MCF 10A (cell line): ENCODE measurements at regions of chr10 and their contacts with region 1.

Region 1: GRCh38 chr10:25080880-25081581 is 64.6 kb downstream of the THNSL1 start:
- DNase-seq: peak; percentile 82
- H3K4me3 Mint-ChIP-seq: no peak overlapping the region
- H3K27ac Mint-ChIP-seq: no peak overlapping the region
- H3K4me1 Mint-ChIP-seq: no peaks in the 10 kb centered on the region
- H3K27me3 Mint-ChIP-seq: no peaks in the 10 kb centered on the region
- CTCF ChIP-seq: peak; percentile 82

Region 2: GRCh38 chr10:24642622-24643417 is 438.2 kb before region 1 on chr10:
- CTCF ChIA-PET with region 1: interaction called, 11 read pairs
- POLR2A ChIA-PET with region 1: interaction called, 4 read pairs
- intact Hi-C with region 1: loop called (anchors 1 kb)
- DNase-seq: peak; percentile 77
- H3K4me3 Mint-ChIP-seq: no peak overlapping the region
- H3K27ac Mint-ChIP-seq: no peak overlapping the region
- H3K4me1 Mint-ChIP-seq: peaks cover 6% of the 10 kb centered on the region
- H3K27me3 Mint-ChIP-seq: no peaks in the 10 kb centered on the region
- CTCF ChIP-seq: peak; percentile 68

Region 3: GRCh38 chr10:24989867-24990266 is 91.2 kb before region 1 on chr10:
- CTCF ChIA-PET with region 1: interaction called, 13 read pairs
- POLR2A ChIA-PET with region 1: no interaction called
- intact Hi-C with region 1: loop called (anchors 1 kb)
- DNase-seq: peak; percentile 4
- H3K4me3 Mint-ChIP-seq: no peak overlapping the region
- H3K27ac Mint-ChIP-seq: no peak overlapping the region
- H3K4me1 Mint-ChIP-seq: no peaks in the 10 kb centered on the region
- H3K27me3 Mint-ChIP-seq: no peaks in the 10 kb centered on the region
- CTCF ChIP-seq: peak; percentile 37

Region 4: DNA sequence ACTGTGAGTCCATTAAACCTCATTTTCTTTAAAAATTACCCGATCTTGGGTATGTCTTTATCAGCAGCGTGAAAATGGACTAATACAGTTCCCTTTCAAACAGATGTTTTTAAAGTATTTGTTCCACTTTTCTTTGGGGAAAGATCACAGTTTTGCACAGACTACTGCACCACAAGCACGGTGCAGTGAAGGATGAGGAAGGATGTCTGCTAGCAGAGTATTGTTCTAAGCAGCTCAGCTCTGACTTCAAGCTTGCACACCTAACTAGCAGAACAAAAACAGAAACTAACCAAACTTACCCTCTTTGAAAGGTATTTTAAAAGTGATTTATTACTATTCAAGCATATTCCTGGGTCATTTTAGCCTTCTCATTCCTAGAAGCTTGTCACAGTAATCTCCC is 44.6 kb before region 1 on chr10:
- CTCF ChIA-PET with region 1: interaction called, 27 read pairs
- POLR2A ChIA-PET with region 1: no interaction called
- intact Hi-C with region 1: no loop called
- DNase-seq: no peak
- H3K4me3 Mint-ChIP-seq: no peak overlapping the region
- H3K27ac Mint-ChIP-seq: no peak overlapping the region
- H3K4me1 Mint-ChIP-seq: peaks cover 9% of the 10 kb centered on the region
- H3K27me3 Mint-ChIP-seq: no peaks in the 10 kb centered on the region
- CTCF ChIP-seq: no peak

Region 5: GRCh38 chr10:25059764-25060389 is 21.2 kb before region 1 on chr10:
- CTCF ChIA-PET with region 1: interaction called, 111 read pairs
- POLR2A ChIA-PET with region 1: interaction called, 4 read pairs
- intact Hi-C with region 1: no loop called
- DNase-seq: peak; percentile 94
- H3K4me3 Mint-ChIP-seq: peak overlapping the region; percentile 53
- H3K27ac Mint-ChIP-seq: peak overlapping the region; percentile 78
- H3K4me1 Mint-ChIP-seq: peaks cover 35% of the 10 kb centered on the region
- H3K27me3 Mint-ChIP-seq: no peaks in the 10 kb centered on the region
- CTCF ChIP-seq: no peak